ENCODE measurements at regions of chr17 and their contacts with region 1.

Region 1: DNA sequence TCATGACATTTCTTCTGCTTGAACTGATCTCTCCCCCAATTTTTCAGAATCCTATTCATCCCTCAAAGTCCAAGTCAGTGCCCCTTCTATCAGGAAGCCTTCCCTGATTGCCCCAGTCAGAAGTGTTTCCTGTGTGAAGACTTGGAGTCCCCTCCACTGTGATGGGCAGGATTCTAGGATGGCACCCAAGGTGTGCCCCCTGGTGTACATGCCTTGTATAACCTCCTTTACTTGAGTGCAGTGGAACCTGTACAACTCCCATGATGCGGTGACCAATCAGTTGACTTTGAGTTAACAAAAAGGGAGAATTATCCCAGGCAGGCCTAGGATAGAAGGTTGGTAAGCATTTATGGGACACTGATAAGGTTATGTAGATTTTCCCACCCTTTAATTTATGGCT is 23.4 kb downstream of the MYH13 start:
- DNase-seq: peak; percentile 37
- H3K4me3 ChIP-seq: no peak overlapping the region
- H3K27ac ChIP-seq: no peak overlapping the region
- H3K4me1 ChIP-seq: no peaks in the 10 kb centered on the region
- H3K27me3 ChIP-seq: no peaks in the 10 kb centered on the region
- CTCF ChIP-seq: peak; percentile 49

Region 2: GRCh38 chr17:10278213-10278612 is 71.2 kb before region 1 on chr17:
- CTCF ChIA-PET with region 1: no interaction called
- POLR2A ChIA-PET with region 1: interaction called, 10 read pairs
- intact Hi-C with region 1: no loop called
- DNase-seq: peak; percentile 45
- H3K4me3 ChIP-seq: peak overlapping the region; percentile 14
- H3K27ac ChIP-seq: no peak overlapping the region
- H3K4me1 ChIP-seq: no peaks in the 10 kb centered on the region
- H3K27me3 ChIP-seq: no peaks in the 10 kb centered on the region
- CTCF ChIP-seq: no peak

Region 3: DNA sequence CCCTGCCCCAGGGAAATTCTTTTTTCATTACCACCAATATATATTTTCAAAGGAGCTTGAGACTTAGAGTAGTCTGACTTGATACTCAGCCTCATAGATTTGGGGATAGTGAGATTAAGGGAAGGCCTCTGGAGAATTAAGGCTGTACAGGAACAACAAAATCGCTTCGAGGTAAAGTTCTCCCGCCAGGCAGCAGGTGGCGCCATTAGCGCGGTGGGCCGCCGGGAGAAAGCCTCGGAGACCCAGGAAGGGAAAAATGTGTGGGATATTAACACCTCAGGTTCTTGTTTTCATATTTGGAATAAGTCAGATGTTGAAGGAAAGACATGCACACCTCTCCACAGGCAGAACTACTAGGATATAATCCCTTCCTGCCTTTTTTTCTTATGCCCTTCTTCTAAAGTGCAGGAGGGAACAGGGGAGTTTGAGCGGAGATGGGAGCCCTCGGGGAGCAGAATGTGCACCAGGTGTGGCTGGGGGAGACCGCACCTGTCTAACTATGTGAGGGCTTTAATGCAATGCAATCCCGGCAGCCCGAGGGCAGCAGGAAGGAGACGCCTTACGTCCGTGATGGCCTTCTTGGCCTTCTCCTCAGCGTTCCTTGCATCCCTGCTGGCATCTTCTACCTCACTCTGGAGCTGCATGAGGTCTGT is 281.8 kb after region 1 on chr17:
- CTCF ChIA-PET with region 1: no interaction called
- POLR2A ChIA-PET with region 1: no interaction called
- intact Hi-C with region 1: no loop called
- DNase-seq: peak; percentile 57
- H3K4me3 ChIP-seq: no peak overlapping the region
- H3K27ac ChIP-seq: no peak overlapping the region
- H3K4me1 ChIP-seq: no peaks in the 10 kb centered on the region
- H3K27me3 ChIP-seq: no peaks in the 10 kb centered on the region
- CTCF ChIP-seq: peak; percentile 93

Region 4: DNA sequence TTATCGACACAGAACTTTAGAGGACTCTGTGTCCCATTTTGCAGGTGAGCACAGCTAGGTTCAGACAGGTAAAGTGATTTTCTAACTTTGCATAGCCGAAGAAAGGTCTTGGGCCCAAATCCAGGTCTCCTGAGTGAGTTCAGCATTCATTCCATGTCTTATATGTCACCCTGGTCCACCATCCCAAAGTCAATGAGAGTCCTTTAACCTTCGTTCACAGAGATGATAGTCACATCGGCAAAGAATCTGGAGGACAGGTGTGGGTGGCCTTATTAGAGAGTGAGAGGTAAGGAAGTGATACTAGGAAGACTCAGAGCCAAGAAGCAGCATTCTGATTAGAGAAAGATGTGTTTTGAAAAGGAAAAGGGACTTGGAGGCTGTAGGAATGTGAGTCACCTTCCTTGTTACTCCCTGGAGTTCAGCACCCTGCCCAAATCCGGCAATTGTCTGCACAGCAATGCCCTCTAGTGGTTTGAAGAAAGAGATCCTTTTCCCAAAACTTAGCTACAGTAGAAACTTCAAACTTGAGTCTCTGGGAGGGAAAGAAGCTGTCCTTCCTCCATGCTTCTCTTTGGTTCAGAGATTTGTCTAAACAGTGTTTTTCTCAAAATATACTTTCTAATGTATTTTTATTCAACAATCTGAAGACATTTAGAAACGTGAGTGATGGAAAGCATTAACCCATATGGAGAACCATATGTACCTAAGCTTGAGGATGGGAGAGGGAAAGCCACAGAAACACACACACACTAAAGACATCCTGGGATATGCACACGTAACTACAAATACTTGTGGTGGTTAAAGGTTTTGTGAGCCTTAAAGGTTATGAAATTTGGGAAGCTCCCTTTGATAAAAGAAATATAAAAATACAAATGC is 795.2 kb after region 1 on chr17:
- CTCF ChIA-PET with region 1: no interaction called
- POLR2A ChIA-PET with region 1: no interaction called
- intact Hi-C with region 1: no loop called
- DNase-seq: peak; percentile 83
- H3K4me3 ChIP-seq: no peak overlapping the region
- H3K27ac ChIP-seq: no peak overlapping the region
- H3K4me1 ChIP-seq: peaks cover 9% of the 10 kb centered on the region
- H3K27me3 ChIP-seq: no peaks in the 10 kb centered on the region
- CTCF ChIP-seq: peak; percentile 88

Measured in A673 (cell line).